H1 (cell line): ENCODE measurements at regions of chr1 and their contacts with region 1.

Region 1: DNA sequence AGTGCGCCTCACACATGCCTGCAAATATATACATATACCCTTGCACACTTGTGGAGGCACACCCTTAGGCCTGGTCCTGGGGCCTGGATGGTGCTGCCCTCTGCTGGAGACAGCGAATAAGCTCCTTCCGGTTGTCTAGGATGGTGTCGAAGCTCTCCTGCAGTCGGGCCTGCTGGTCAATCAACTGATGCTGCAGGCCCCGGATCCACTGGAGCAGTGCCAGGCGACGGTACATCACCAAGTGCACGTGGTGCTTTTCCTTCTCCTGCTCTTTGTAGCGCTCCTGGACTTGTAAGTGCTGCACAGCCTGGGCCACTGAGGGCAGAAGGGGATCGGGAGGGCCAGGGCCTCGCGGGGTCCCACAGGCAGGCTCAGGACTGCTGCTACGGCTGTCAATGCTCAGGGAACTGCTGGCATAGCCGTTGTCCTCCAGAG is 3.1 kb downstream of the C1orf216 start:
- DNase-seq: peak in 1 of 2 experiments; percentile 88
- H3K4me3 ChIP-seq: no peak overlapping the region
- H3K27ac ChIP-seq: no peak overlapping the region
- H3K4me1 ChIP-seq: peaks cover 3 to 9% (median 4%) of the 10 kb centered on the region in 4 experiments; a peak in 6 of 7 replicates
- H3K27me3 ChIP-seq: no peaks in the 10 kb centered on the region
- CTCF ChIP-seq: peak; percentile 89 to 95 (median 93)
- EP300 ChIP-seq: no peak
- POLR2A ChIP-seq: no peak
- RAD21 ChIP-seq: peak; percentile 85 to 91

Region 2: GRCh38 chr1:35564037-35564883 is 151.3 kb before region 1 on chr1:
- CTCF ChIA-PET with region 1: interaction called, 91 read pairs
- POLR2A ChIA-PET with region 1: interaction called, 12 read pairs
- DNase-seq: peak in 1 of 2 experiments; percentile 94
- H3K4me3 ChIP-seq: no peak overlapping the region
- H3K27ac ChIP-seq: no peak overlapping the region
- H3K4me1 ChIP-seq: 0 out of 7 replicates have a peak, but pooled peaks cover 0 to 2% (median 0%) of the 10 kb centered on the region in 4 experiments
- H3K27me3 ChIP-seq: peaks cover 0 to under 1% (median 0%) of the 10 kb centered on the region in 4 experiments; a peak in 1 of 7 replicates
- CTCF ChIP-seq: peak in 2 of 3 experiments; percentile 86 to 91; a peak in 3 of 4 replicates
- EP300 ChIP-seq: peak in 1 of 2 experiments; percentile 37; a peak in 1 of 3 replicates
- POLR2A ChIP-seq: no peak
- RAD21 ChIP-seq: peak; percentile 64 to 77

Region 3: DNA sequence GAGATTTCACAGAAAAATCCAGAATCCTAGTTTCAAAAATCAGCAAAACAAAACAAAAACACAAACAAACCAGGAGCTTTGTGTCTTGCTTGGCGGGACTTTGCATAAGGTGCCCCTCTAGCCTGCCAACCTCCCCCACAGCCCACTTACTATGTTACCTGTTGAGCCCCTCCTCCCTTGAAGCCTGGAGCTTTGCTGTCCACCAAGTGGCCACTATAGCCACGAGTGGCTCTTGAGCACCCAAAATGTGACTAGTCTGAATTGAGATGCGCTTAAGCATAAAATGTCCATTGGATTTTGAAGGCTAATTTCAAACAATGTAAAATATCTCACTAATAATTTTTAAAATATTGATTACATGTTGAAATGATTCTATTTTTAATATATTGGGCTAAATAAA is 130.3 kb before region 1 on chr1:
- CTCF ChIA-PET with region 1: interaction called, 20 read pairs
- POLR2A ChIA-PET with region 1: interaction called, 3 read pairs
- DNase-seq: no peak
- H3K4me3 ChIP-seq: no peak overlapping the region
- H3K27ac ChIP-seq: no peak overlapping the region
- H3K4me1 ChIP-seq: peaks cover 0 to 8% (median 3%) of the 10 kb centered on the region in 4 experiments; a peak in 3 of 7 replicates
- H3K27me3 ChIP-seq: peaks cover 0 to 2% (median 0%) of the 10 kb centered on the region in 4 experiments; a peak in 1 of 7 replicates
- CTCF ChIP-seq: no peak
- EP300 ChIP-seq: no peak
- POLR2A ChIP-seq: no peak
- RAD21 ChIP-seq: no peak

Region 4: GRCh38 chr1:35629051-35629450 is 86.5 kb before region 1 on chr1:
- CTCF ChIA-PET with region 1: interaction called, 20 read pairs
- POLR2A ChIA-PET with region 1: no interaction called
- DNase-seq: no peak
- H3K4me3 ChIP-seq: no peak overlapping the region
- H3K27ac ChIP-seq: no peak overlapping the region
- H3K4me1 ChIP-seq: no peaks in the 10 kb centered on the region
- H3K27me3 ChIP-seq: no peaks in the 10 kb centered on the region
- CTCF ChIP-seq: no peak
- EP300 ChIP-seq: no peak
- POLR2A ChIP-seq: no peak
- RAD21 ChIP-seq: no peak

Region 5: DNA sequence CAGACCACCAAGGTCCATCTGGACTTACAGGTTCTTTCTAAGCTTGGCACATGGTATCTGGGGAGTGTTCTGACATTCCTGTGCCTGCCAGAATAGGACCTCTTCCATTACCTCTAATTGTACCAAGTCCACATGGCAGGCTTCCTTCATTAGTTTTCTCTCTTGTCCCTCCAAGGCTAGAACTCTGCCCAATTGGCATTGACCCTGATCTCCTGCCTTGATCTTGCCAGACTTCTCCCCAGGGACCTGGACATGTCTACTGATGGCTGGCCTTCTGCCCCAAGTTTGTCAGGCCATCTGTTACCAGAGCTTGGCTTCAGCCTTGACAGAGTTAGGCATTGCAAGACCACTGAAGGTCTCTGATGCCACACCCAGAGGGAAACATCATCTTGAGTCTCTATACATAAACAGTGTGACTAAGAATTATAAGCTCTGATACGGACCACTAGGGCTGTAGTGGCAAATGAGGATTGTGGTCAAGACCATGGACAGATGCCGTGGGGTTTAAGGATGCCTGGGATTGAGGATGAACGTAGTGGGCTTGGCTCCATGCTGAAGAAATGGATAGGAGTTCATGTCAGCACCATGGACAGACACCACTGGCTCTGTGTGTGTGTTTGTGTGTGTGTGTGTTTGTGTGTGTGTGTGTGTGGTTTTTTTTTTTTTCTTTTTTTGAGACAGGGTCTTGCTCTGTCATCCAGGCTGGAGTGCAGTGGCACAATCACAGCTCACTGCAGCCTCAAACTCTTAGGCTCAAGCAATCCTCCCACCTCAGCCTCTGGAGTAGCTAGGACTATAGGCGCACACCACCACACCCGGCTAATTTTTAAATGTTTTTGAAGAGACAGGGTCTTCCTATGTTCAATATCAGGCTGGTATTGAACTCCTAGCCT is 54.8 kb before region 1 on chr1:
- CTCF ChIA-PET with region 1: interaction called, 18 read pairs
- POLR2A ChIA-PET with region 1: no interaction called
- DNase-seq: peak in 1 of 2 experiments; percentile 17
- H3K4me3 ChIP-seq: no peak overlapping the region
- H3K27ac ChIP-seq: no peak overlapping the region
- H3K4me1 ChIP-seq: no peaks in the 10 kb centered on the region
- H3K27me3 ChIP-seq: peaks cover 0 to 2% (median 0%) of the 10 kb centered on the region in 4 experiments; a peak in 1 of 7 replicates
- CTCF ChIP-seq: no peak
- EP300 ChIP-seq: no peak
- POLR2A ChIP-seq: no peak
- RAD21 ChIP-seq: 0 out of 4 replicates have a peak, but pooled peaks of 1 of the 2 experiments have one; percentile 8

Region 6: GRCh38 chr1:35691080-35691479 is 24.5 kb before region 1 on chr1:
- CTCF ChIA-PET with region 1: interaction called, 29 read pairs
- POLR2A ChIA-PET with region 1: interaction called, 11 read pairs
- DNase-seq: no peak
- H3K4me3 ChIP-seq: peak overlapping the region in 2 of 4 experiments; percentile 3 to 6; a peak in 3 of 8 replicates
- H3K27ac ChIP-seq: no peak overlapping the region
- H3K4me1 ChIP-seq: peaks cover 2 to 14% (median 5%) of the 10 kb centered on the region in 4 experiments; a peak in 6 of 7 replicates
- H3K27me3 ChIP-seq: no peaks in the 10 kb centered on the region
- CTCF ChIP-seq: no peak
- EP300 ChIP-seq: no peak
- POLR2A ChIP-seq: no peak
- RAD21 ChIP-seq: no peak

Region 7: GRCh38 chr1:35851132-35851869 is 135.7 kb after region 1 on chr1:
- CTCF ChIA-PET with region 1: no interaction called
- POLR2A ChIA-PET with region 1: no interaction called
- DNase-seq: no peak
- H3K4me3 ChIP-seq: no peak overlapping the region
- H3K27ac ChIP-seq: no peak overlapping the region
- H3K4me1 ChIP-seq: peaks cover 1 to 4% (median 4%) of the 10 kb centered on the region in 4 experiments; a peak in 2 of 7 replicates
- H3K27me3 ChIP-seq: no peaks in the 10 kb centered on the region
- CTCF ChIP-seq: no peak
- EP300 ChIP-seq: no peak
- POLR2A ChIP-seq: no peak
- RAD21 ChIP-seq: no peak